ENCODE measurements at regions of chr5 and their contacts with region 1.

Region 1: DNA sequence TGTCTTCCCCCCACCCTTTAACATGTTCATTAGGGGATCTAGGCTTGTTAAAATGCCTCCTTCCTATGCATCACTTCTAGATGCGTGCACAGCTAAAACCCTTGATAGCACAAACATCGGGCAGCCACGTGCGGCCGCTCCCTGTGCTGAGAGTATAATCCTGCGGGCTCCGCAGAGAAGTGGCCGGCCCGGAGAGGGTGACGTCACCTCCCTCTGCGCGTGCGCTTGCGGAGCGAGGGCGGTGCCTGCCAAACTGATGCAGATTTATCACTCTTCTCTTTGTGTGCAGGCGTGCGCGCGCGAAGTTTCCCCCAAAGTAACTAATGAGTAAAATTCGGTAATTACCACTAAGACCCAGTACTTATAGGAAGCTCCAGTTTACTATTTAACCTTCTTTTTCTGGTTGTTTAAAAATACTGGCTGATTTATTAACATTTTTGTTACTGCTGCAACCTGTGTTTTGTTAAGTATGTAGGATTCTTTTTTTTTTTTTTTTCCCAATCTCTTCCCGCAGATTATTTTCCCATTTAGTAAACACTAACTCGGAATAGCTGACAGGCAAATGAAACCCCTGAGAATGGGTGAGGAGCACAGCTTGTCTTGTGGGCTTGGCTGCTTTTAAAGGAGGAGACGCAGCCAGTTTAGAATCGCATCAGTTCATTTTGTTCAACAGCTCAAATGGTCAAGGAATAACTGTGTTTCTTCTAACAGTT is 121.6 kb downstream of the TRIO start:
- DNase-seq: peak; percentile 93
- H3K4me3 ChIP-seq: peak overlapping the region; percentile 27
- H3K4me3 Mint-ChIP-seq: peak overlapping the region; percentile 79
- H3K27ac Mint-ChIP-seq: peak overlapping the region; percentile 84
- H3K4me1 ChIP-seq: peaks cover 50% of the 10 kb centered on the region
- H3K4me1 Mint-ChIP-seq: peaks cover 47% of the 10 kb centered on the region
- H3K27me3 ChIP-seq: no peaks in the 10 kb centered on the region
- H3K27me3 Mint-ChIP-seq: no peaks in the 10 kb centered on the region
- CTCF ChIP-seq: no peak

Region 2: GRCh38 chr5:13783726-13784125 is 481.0 kb before region 1 on chr5:
- CTCF ChIA-PET with region 1: no interaction called
- POLR2A ChIA-PET with region 1: no interaction called
- intact Hi-C with region 1: no loop called
- DNase-seq: no peak
- H3K4me3 ChIP-seq: no peak overlapping the region
- H3K4me3 Mint-ChIP-seq: no peak overlapping the region
- H3K27ac Mint-ChIP-seq: no peak overlapping the region
- H3K4me1 ChIP-seq: no peaks in the 10 kb centered on the region
- H3K4me1 Mint-ChIP-seq: no peaks in the 10 kb centered on the region
- H3K27me3 ChIP-seq: no peaks in the 10 kb centered on the region
- H3K27me3 Mint-ChIP-seq: peaks cover 13% of the 10 kb centered on the region
- CTCF ChIP-seq: no peak

Region 3: DNA sequence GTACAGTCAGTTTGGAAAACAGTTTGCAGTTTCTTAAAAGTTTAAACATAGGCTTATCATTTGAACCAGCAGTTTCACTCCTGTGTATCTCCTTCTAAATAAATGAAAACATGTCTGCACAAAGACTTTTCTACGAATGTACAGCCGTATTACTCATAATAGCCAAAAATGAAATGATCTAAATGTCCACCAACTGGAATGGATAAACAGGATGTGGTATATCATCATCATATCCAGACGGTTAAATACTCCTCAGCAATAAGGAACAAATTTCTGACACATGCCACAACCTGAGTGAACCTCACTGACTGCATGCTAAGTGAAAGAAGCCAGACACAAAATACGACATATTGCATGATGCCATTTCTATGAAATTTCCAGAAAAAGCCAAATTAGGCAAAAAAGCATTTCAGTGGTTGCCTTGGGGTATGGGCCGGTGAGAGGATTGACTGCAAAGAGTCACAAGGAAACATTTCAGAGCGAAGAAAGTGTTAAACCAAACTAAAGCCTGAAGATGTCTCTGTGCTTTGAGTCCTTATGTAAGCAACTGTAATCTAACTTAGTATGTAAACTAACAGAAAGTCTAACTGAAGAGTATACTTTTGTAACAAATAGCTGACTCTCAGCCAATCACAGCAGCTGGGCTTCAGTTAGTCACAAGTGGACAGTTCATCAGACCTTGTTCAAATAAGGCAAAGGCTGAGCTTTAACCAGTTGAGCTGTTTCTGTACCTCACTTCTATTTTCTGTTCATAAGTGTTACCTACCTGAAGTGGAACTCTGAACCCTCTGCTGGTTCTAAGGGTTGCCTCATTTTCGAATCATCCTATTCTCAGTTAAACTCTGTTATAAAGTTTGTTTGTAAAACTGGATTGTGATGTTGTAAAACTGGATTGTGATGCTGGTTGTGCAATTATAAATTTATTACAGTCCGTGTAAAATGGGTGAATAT is 56.4 kb before region 1 on chr5:
- CTCF ChIA-PET with region 1: no interaction called
- POLR2A ChIA-PET with region 1: no interaction called
- intact Hi-C with region 1: loop called (anchors 5 kb)
- DNase-seq: peak; percentile 53 to 63
- H3K4me3 ChIP-seq: no peak overlapping the region
- H3K4me3 Mint-ChIP-seq: no peak overlapping the region
- H3K27ac Mint-ChIP-seq: no peak overlapping the region
- H3K4me1 ChIP-seq: peaks cover 32% of the 10 kb centered on the region
- H3K4me1 Mint-ChIP-seq: peaks cover 48% of the 10 kb centered on the region
- H3K27me3 ChIP-seq: no peaks in the 10 kb centered on the region
- H3K27me3 Mint-ChIP-seq: no peaks in the 10 kb centered on the region
- CTCF ChIP-seq: no peak

Region 4: DNA sequence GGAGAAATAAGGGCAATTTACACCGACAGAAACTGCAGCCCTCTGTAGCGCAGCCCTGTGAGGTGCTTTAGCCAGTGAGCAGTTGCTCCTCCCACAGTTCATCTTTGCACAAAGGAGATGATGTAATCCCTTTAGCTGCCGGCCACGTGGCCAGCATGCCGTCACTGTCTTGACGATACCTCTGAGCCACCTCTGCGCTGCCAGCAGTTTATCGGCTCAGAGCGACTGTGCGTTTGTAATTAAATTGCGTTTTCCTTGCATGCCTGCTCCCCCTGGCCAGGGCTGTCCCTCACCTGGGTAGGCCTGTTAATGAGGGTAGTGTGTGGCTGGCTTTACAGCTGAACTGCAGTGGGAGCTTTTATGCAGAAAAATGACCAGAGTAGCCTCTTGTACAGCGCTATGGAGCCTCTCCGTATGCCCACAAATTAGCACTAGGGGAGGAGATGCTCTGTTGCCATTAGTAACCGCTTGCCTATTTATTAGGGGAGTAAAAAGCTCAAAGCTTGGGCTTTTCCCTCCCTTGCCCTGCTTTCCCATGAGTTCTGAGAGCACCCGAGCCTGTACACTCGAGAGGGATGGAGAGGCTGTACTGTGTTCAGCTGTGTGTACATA is 14.6 kb before region 1 on chr5:
- CTCF ChIA-PET with region 1: no interaction called
- POLR2A ChIA-PET with region 1: interaction called, 3 read pairs
- intact Hi-C with region 1: loop called (anchors 1 kb)
- DNase-seq: peak; percentile 84 to 87
- H3K4me3 ChIP-seq: peak overlapping the region; percentile 31
- H3K4me3 Mint-ChIP-seq: peak overlapping the region; percentile 70
- H3K27ac Mint-ChIP-seq: peak overlapping the region; percentile 80
- H3K4me1 ChIP-seq: peaks cover 8% of the 10 kb centered on the region; the same call in 1 of the 2 replicates
- H3K4me1 Mint-ChIP-seq: peaks cover 19% of the 10 kb centered on the region
- H3K27me3 ChIP-seq: no peaks in the 10 kb centered on the region
- H3K27me3 Mint-ChIP-seq: no peaks in the 10 kb centered on the region
- CTCF ChIP-seq: no peak

Measured in Caco-2 (cell line).